GM10248 (cell line): ENCODE measurements at regions of chr1 and their contacts with region 1.

Region 1: GRCh38 chr1:74714429-74715235 is 18.2 kb downstream of the CRYZ start:
- DNase-seq: peak; percentile 22
- CTCF ChIP-seq: no peak

Region 2: GRCh38 chr1:74689621-74690363 is 24.8 kb before region 1 on chr1:
- CTCF ChIA-PET with region 1: interaction called, 15 read pairs
- POLR2A ChIA-PET with region 1: no interaction called
- DNase-seq: peak; percentile 18
- CTCF ChIP-seq: peak; percentile 84

Region 3: GRCh38 chr1:74699331-74699730 is 15.3 kb before region 1 on chr1:
- CTCF ChIA-PET with region 1: interaction called, 15 read pairs
- POLR2A ChIA-PET with region 1: no interaction called
- DNase-seq: no peak
- CTCF ChIP-seq: no peak

Region 4: DNA sequence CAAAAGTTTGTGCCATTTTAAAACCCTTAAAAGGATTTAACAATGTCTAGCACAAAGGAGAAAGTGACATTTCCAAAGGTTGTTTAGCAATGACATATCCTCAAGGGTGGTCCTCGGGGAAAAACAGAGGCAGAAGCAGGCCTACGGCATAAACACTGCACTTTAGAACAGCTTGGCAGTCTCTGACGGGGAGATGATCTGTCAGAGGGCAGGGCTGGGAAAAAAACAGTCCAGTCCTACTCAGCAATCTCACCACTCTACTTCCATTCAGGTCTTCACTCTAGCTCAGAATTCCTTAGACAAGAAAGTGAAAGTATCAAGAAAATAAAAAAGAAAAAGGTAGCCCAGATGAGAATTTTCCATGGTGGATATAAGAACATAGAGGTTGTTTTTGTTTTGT is 14.1 kb after region 1 on chr1:
- CTCF ChIA-PET with region 1: interaction called, 33 read pairs
- POLR2A ChIA-PET with region 1: no interaction called
- DNase-seq: no peak
- CTCF ChIP-seq: no peak

Region 5: DNA sequence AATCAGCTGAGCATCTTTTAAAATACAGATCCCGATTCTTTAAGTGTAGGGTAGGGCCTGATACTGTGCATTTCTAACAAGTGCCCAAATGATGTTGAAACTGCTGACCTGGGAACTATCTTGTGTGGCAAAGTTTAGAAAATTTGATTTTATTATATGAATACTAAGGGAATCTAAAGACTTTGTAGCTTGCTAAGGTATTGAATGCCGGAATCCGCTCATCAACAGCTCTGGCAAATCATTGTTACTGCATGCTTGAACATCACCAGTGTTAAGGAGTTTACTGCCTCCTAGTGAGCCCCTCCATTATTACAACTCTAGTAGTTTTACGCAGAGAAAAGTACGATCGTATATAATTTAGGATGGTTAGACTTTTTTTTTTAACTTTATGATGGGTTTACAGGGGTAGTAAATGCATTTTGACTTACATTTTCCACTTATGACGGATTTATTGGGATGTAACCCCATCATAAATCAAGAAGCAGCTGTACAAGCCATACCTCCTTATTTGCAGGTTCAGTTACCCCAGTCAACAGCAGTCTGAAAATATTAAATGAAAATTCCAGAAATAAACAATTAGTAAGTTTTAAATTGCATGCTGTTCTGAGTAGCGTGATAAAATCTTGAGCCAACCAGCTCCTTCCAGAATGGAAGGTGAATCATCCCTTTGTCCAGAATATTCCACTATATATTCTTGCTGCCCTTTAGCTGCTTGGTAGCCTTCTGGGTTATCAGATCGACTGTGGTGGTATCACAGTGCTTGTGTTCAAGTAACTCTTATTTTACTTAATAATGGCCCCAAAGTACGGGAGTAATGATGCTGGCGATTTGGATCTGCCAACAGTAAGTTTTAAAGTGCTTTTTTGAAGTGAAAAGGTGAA is 19.2 kb after region 1 on chr1:
- CTCF ChIA-PET with region 1: interaction called, 33 read pairs
- POLR2A ChIA-PET with region 1: no interaction called
- DNase-seq: peak; percentile 53
- CTCF ChIP-seq: peak; percentile 68